ENCODE measurements at regions of chr22 and their contacts with region 1.

Region 1: DNA sequence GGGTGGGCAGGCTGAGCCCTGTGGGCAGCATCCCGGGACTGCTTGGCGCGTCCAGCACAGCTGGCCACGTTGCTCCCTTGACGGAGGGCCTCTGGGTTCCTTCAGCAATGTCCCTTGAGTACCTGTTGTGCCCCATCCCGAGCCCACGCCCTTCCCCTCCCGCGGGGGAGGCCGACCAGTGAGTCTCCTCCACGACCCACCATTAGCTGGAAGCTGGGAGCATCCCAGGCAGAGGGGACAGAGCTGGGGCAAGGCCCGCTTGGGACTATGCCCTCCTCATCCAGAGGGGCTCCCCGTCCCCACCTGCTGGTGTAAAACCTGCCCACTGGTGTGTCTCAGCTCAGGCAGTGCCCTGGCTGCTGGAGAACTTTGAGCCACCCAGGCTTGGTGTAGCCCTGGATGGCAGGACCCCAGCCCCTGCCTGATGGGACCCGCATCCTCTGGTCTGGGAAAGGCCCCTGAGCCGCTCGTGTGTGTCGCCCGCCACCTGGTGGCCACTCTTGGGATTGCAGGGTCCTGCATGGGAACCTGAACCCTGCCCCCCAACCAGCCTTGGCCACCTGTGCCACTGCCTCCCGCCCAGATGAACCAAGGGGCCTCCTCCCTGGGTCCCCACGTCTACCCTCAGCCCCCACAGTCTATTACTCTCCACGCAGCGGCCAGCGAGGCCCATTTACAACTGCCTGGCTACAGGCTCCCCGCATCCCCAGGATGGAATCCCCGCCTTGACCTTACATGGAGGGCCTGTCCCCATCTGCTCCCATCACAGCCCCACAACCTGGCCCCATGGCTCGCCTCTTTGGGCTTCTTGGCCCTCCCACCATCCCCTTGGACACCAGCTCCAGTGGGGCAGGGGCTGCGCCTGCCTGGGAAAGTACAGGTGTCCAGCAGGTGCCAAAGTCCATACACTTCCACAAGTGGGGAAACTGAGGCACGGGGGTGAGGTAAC is 16.6 kb upstream of the ARHGAP8 start:
- DNase-seq: peak; percentile 65
- ATAC-seq: peak; percentile 61
- H3K4me3 ChIP-seq: no peak overlapping the region
- H3K27ac ChIP-seq: no peak overlapping the region
- H3K4me1 ChIP-seq: peaks cover 18% of the 10 kb centered on the region; the same call in 1 of the 2 replicates
- H3K27me3 ChIP-seq: 0 out of 2 replicates have a peak, but pooled peaks cover 9% of the 10 kb centered on the region
- CTCF ChIP-seq: peak; percentile 85

Region 2: DNA sequence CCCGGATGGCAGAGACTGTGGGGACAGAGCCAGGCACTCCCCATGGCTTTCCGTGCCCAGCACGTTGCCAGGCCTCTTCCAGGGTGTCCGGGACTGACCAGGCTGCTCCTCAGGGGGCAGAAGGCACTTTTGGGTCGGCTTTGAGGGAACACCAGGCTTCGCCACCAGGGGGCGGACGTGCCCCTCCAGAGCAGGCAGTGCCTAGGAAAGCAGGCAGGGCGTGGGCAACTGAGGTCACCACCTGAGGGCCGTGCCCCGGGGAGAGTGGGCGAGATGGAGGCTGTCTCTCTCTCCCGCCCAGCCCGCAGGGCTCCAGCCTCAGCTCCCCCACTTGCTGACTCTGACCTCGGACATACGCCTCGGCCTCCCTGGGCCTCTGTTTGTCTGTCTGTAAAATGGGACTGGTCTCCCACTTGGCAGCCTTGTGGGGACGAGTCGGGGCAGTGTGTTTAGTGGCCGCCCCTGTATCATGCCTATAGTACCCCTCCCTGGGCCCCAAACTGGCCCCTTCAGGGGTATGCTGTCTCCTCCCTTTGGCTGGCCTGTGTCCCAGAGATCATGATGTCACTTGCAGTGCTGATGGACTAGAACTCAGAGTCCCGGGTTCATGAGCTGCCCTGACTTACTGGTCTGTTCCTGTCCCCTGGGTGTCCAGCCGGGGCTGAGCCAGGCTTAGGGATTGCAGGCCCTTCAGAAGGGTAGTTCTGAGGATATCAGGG is 38.2 kb before region 1 on chr22:
- CTCF ChIA-PET with region 1: no interaction called
- POLR2A ChIA-PET with region 1: no interaction called
- intact Hi-C with region 1: loop called (anchors 1 kb)
- DNase-seq: peak; percentile 73
- ATAC-seq: peak; percentile 81
- H3K4me3 ChIP-seq: no peak overlapping the region
- H3K27ac ChIP-seq: no peak overlapping the region
- H3K4me1 ChIP-seq: no peaks in the 10 kb centered on the region
- H3K27me3 ChIP-seq: no peaks in the 10 kb centered on the region
- CTCF ChIP-seq: peak; percentile 86

Region 3: GRCh38 chr22:44828193-44828592 is 92.4 kb after region 1 on chr22:
- CTCF ChIA-PET with region 1: no interaction called
- POLR2A ChIA-PET with region 1: no interaction called
- intact Hi-C with region 1: no loop called
- DNase-seq: peak; percentile 8
- ATAC-seq: no peak
- H3K4me3 ChIP-seq: no peak overlapping the region
- H3K27ac ChIP-seq: no peak overlapping the region
- H3K4me1 ChIP-seq: no peaks in the 10 kb centered on the region
- H3K27me3 ChIP-seq: no peaks in the 10 kb centered on the region
- CTCF ChIP-seq: peak; percentile 54